PC-9 (cell line): ENCODE measurements at regions of chr2 and their contacts with region 1.

Region 1: GRCh38 chr2:138948070-138948539 is 167.9 kb upstream of the NXPH2 start:
- DNase-seq: peak; percentile 64 to 78
- H3K4me3 ChIP-seq: no peak overlapping the region
- H3K27ac ChIP-seq: peak overlapping the region; percentile 82
- H3K4me1 ChIP-seq: peaks cover 26% of the 10 kb centered on the region
- H3K27me3 ChIP-seq: no peaks in the 10 kb centered on the region
- CTCF ChIP-seq: no peak

Region 2: DNA sequence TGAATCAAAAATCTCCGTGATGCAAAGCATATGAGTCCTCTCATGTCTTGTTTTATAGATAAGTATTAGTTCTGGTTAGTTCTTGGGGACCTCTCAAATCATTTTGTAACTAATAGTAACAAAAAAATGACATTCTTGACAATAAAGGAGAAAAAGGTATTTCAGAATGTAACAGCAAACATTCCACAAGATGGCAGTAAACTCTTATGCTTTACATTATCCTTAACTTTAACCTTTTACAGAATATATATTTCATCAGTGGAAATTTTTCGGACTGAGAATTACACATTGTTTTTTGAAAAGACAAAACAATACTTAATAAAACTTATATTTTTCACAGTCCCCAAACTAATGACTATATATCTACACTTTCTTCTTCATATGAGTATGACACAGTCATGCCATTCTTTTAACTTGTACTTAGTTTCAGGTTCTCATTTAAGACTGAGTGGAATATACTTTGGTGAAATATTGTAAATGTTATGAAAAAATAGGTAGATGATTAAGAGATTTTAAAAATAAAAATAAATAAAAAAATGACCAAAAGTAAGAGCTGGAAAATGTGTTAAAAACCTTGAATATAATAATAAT is 25.0 kb before region 1 on chr2:
- CTCF ChIA-PET with region 1: no interaction called
- POLR2A ChIA-PET with region 1: no interaction called
- intact Hi-C with region 1: loop called (anchors 1 kb)
- DNase-seq: peak in 1 of 2 experiments; percentile 36
- H3K4me3 ChIP-seq: no peak overlapping the region
- H3K27ac ChIP-seq: no peak overlapping the region
- H3K4me1 ChIP-seq: no peaks in the 10 kb centered on the region
- H3K27me3 ChIP-seq: no peaks in the 10 kb centered on the region
- CTCF ChIP-seq: peak; percentile 71

Region 3: DNA sequence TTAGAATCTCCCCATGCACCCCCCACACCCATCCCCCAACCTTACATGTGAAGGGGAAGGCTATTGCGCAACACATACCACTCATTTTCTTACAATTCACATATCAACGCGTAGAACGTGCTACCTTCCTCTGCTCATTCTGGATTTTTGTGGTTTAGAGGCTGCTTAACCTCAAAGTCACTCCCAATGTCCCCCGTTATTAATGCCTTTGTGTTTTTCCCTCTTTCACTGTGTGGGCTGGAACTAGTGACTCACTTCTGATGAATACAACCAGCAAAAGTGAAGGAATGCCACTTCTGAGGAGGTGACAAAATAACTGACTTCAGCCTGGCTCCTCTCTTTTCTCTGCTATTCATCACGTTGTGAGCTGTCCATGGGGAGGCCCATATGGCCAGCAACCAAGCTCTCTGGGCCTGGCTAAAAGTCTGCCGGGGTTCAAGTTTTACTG is 174.6 kb after region 1 on chr2:
- CTCF ChIA-PET with region 1: no interaction called
- POLR2A ChIA-PET with region 1: no interaction called
- intact Hi-C with region 1: loop called (anchors 1 kb)
- DNase-seq: peak; percentile 36 to 46
- H3K4me3 ChIP-seq: no peak overlapping the region
- H3K27ac ChIP-seq: no peak overlapping the region
- H3K4me1 ChIP-seq: no peaks in the 10 kb centered on the region
- H3K27me3 ChIP-seq: no peaks in the 10 kb centered on the region
- CTCF ChIP-seq: no peak